Activated B cell treated with CpG ODN at 0.5 μM for 24 hours (primary cell): ENCODE measurements at regions of chr16 and their contacts with region 1.

Region 1: GRCh38 chr16:68022704-68023522 is at the starts of genes DDX28 and DUS2:
- DNase-seq: peak; percentile 97
- ATAC-seq: peak; percentile 93
- H3K4me3 Mint-ChIP-seq: peak within 1 kb of the TSS; percentile 99
- H3K27ac Mint-ChIP-seq: peak within 1 kb of the TSS; percentile 97
- H3K4me1 Mint-ChIP-seq: peaks cover 31% of the 10 kb centered on the region
- H3K27me3 Mint-ChIP-seq: no peaks in the 10 kb centered on the region
- CTCF ChIP-seq: no peak
- total RNA-seq, gene DDX28: 19.2 and 19.7 TPM in 2 replicates
- total RNA-seq, gene DUS2: 54.2 and 62.0 TPM in 2 replicates

Region 2: GRCh38 chr16:67968400-67969253 is 54.3 kb before region 1 on chr16 and contains the start of gene SLC12A4:
- CTCF ChIA-PET with region 1: no interaction called
- POLR2A ChIA-PET with region 1: interaction called, 3 read pairs
- intact Hi-C with region 1: loop called (anchors 1 kb)
- DNase-seq: peak; percentile 87
- ATAC-seq: peak; percentile 93
- H3K4me3 Mint-ChIP-seq: peak within 1 kb of the TSS; percentile 96
- H3K27ac Mint-ChIP-seq: peak within 1 kb of the TSS; percentile 80
- H3K4me1 Mint-ChIP-seq: peaks cover 28% of the 10 kb centered on the region
- H3K27me3 Mint-ChIP-seq: no peaks in the 10 kb centered on the region
- CTCF ChIP-seq: no peak
- total RNA-seq, gene SLC12A4: 24.6 and 37.9 TPM in 2 replicates

Region 3: GRCh38 chr16:67987460-67988160 is 35.3 kb before region 1 on chr16:
- CTCF ChIA-PET with region 1: no interaction called
- POLR2A ChIA-PET with region 1: interaction called, 26 read pairs
- intact Hi-C with region 1: no loop called
- DNase-seq: no peak
- ATAC-seq: no peak
- H3K4me3 Mint-ChIP-seq: no peak overlapping the region
- H3K27ac Mint-ChIP-seq: peak overlapping the region; percentile 54
- H3K4me1 Mint-ChIP-seq: peaks cover 79% of the 10 kb centered on the region
- H3K27me3 Mint-ChIP-seq: no peaks in the 10 kb centered on the region
- CTCF ChIP-seq: no peak

Region 4: GRCh38 chr16:67999985-68000384 is 22.9 kb before region 1 on chr16:
- CTCF ChIA-PET with region 1: interaction called, 5 read pairs
- POLR2A ChIA-PET with region 1: interaction called, 47 read pairs
- intact Hi-C with region 1: loop called (anchors 1 kb)
- DNase-seq: no peak
- ATAC-seq: peak; percentile 27
- H3K4me3 Mint-ChIP-seq: peak overlapping the region; percentile 74
- H3K27ac Mint-ChIP-seq: peak overlapping the region; percentile 87
- H3K4me1 Mint-ChIP-seq: peaks cover 72% of the 10 kb centered on the region
- H3K27me3 Mint-ChIP-seq: no peaks in the 10 kb centered on the region
- CTCF ChIP-seq: no peak

Region 5: GRCh38 chr16:68005786-68006286 is 17.1 kb before region 1 on chr16:
- CTCF ChIA-PET with region 1: interaction called, 5 read pairs
- POLR2A ChIA-PET with region 1: interaction called, 47 read pairs
- intact Hi-C with region 1: no loop called
- DNase-seq: no peak
- ATAC-seq: peak; percentile 98
- H3K4me3 Mint-ChIP-seq: peak overlapping the region; percentile 58
- H3K27ac Mint-ChIP-seq: peak overlapping the region; percentile 95
- H3K4me1 Mint-ChIP-seq: peaks cover 40% of the 10 kb centered on the region
- H3K27me3 Mint-ChIP-seq: no peaks in the 10 kb centered on the region
- CTCF ChIP-seq: no peak